ENCODE measurements at regions of chrX and their contacts with region 1.

Region 1: GRCh38 chrX:41796577-41796976 is 72.6 kb downstream of the GPR82 start:
- DNase-seq: no peak
- ATAC-seq: peak; percentile 41
- H3K4me3 ChIP-seq: no peak overlapping the region
- H3K27ac ChIP-seq: no peak overlapping the region
- H3K4me1 ChIP-seq: no peaks in the 10 kb centered on the region
- H3K27me3 ChIP-seq: no peaks in the 10 kb centered on the region
- CTCF ChIP-seq: no peak
- EP300 ChIP-seq: 0 out of 4 replicates have a peak, but pooled peaks of 1 of the 2 experiments have one; percentile 31
- POLR2A ChIP-seq: no peak
- RAD21 ChIP-seq: no peak

Region 2: DNA sequence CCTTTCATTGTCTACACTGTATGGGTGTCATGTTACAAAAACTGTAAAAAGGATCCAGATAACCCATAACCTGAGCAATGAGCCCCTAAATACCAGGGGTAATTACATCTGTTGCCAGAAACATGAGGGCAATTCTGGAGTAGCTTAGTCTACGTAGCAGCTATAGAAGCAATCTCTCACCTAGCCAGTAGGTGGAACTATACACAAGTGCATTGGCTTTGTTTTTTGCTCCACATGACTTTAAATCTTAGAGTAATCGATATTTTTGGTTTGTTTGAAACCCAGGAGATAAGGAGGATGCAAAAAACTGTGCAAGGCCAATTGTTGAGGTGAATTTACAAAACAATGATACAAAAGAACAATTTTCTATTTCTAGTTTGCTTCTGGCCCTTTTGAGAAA is 15.1 kb before region 1 on chrX:
- CTCF ChIA-PET with region 1: interaction called, 16 read pairs
- POLR2A ChIA-PET with region 1: no interaction called
- RAD21 ChIA-PET with region 1: interaction called, 6 read pairs
- SMC1A ChIA-PET with region 1: interaction called, 6 read pairs
- in situ Hi-C with region 1: no loop called
- intact Hi-C with region 1: no loop called
- DNase-seq: no peak
- ATAC-seq: peak; percentile 93
- H3K4me3 ChIP-seq: no peak overlapping the region
- H3K27ac ChIP-seq: no peak overlapping the region
- H3K4me1 ChIP-seq: no peaks in the 10 kb centered on the region
- H3K27me3 ChIP-seq: no peaks in the 10 kb centered on the region
- CTCF ChIP-seq: peak; percentile 67 to 80 (median 71)
- EP300 ChIP-seq: no peak
- POLR2A ChIP-seq: no peak
- RAD21 ChIP-seq: peak; percentile 80

Region 3: GRCh38 chrX:41881166-41881565 is 84.6 kb after region 1 on chrX:
- CTCF ChIA-PET with region 1: interaction called, 3 read pairs
- POLR2A ChIA-PET with region 1: no interaction called
- RAD21 ChIA-PET with region 1: interaction called, 11 read pairs
- SMC1A ChIA-PET with region 1: interaction called, 8 read pairs
- in situ Hi-C with region 1: no loop called
- intact Hi-C with region 1: no loop called
- DNase-seq: no peak
- ATAC-seq: peak; percentile 64
- H3K4me3 ChIP-seq: no peak overlapping the region
- H3K27ac ChIP-seq: no peak overlapping the region
- H3K4me1 ChIP-seq: no peaks in the 10 kb centered on the region
- H3K27me3 ChIP-seq: no peaks in the 10 kb centered on the region
- CTCF ChIP-seq: no peak
- EP300 ChIP-seq: no peak
- POLR2A ChIP-seq: no peak
- RAD21 ChIP-seq: no peak

Region 4: GRCh38 chrX:42093756-42094155 is 297.2 kb after region 1 on chrX:
- CTCF ChIA-PET with region 1: interaction called, 3 read pairs
- POLR2A ChIA-PET with region 1: no interaction called
- RAD21 ChIA-PET with region 1: no interaction called
- SMC1A ChIA-PET with region 1: interaction called, 6 read pairs
- in situ Hi-C with region 1: no loop called
- intact Hi-C with region 1: loop called (anchors 5 kb)
- DNase-seq: peak; percentile 43
- ATAC-seq: peak; percentile 92
- H3K4me3 ChIP-seq: no peak overlapping the region
- H3K27ac ChIP-seq: no peak overlapping the region
- H3K4me1 ChIP-seq: no peaks in the 10 kb centered on the region
- H3K27me3 ChIP-seq: no peaks in the 10 kb centered on the region
- CTCF ChIP-seq: no peak
- EP300 ChIP-seq: no peak
- POLR2A ChIP-seq: no peak
- RAD21 ChIP-seq: no peak

Region 5: DNA sequence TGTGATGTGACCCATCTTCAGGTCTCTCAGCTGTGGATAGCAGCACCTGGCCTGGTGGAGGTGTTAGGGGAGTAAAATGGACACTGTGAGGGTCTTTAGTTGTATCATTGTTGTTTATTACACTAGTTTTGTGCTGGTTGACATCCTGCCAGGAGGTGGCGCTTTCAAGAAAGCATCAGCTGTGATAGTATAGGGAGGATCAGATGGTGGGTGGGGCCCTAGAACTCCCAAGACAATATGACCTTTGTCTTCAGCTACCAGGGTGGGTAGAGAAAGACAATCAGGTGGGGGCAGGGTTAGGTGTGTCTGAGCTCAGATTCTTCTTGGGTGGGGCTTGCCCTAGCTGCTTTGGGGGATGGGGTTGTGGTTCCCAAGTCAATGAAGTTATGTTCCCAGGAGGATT is 818.6 kb after region 1 on chrX:
- CTCF ChIA-PET with region 1: no interaction called
- POLR2A ChIA-PET with region 1: no interaction called
- RAD21 ChIA-PET with region 1: interaction called, 5 read pairs
- SMC1A ChIA-PET with region 1: interaction called, 4 read pairs
- in situ Hi-C with region 1: no loop called
- intact Hi-C with region 1: loop called (anchors 10 kb)
- DNase-seq: no peak
- ATAC-seq: peak; percentile 29; the same call in 1 of the 3 replicates
- H3K4me3 ChIP-seq: no peak overlapping the region
- H3K27ac ChIP-seq: no peak overlapping the region
- H3K4me1 ChIP-seq: no peaks in the 10 kb centered on the region
- H3K27me3 ChIP-seq: no peaks in the 10 kb centered on the region
- CTCF ChIP-seq: peak; percentile 16 to 33 (median 33); a peak in 3 of 6 replicates
- EP300 ChIP-seq: no peak
- POLR2A ChIP-seq: no peak
- RAD21 ChIP-seq: peak; percentile 56

Region 6: DNA sequence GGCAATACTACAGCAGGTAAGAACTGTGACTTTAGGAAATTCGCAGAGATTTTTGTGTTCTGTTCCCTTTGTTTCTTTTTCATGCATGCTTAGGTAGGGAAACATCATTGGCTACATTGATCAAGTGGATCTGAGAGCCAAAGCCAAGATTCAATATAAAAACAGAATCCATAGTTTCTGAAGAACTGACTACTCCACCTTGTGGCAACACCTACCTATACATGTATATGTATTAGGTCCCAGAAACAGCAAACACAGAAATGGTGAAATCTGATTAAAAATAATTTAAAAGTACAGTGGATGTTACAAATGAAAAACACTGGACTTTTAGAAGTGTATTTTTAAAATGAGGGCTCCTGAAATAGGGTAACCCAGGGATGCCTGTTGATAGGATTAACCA is 1537.0 kb after region 1 on chrX:
- CTCF ChIA-PET with region 1: interaction called, 4 read pairs
- POLR2A ChIA-PET with region 1: no interaction called
- RAD21 ChIA-PET with region 1: no interaction called
- SMC1A ChIA-PET with region 1: no interaction called
- in situ Hi-C with region 1: no loop called
- intact Hi-C with region 1: loop called (anchors 10 kb)
- DNase-seq: no peak
- ATAC-seq: no peak
- H3K4me3 ChIP-seq: no peak overlapping the region
- H3K27ac ChIP-seq: no peak overlapping the region
- H3K4me1 ChIP-seq: no peaks in the 10 kb centered on the region
- H3K27me3 ChIP-seq: no peaks in the 10 kb centered on the region
- CTCF ChIP-seq: peak in 1 of 3 experiments; percentile 8; a peak in 1 of 6 replicates
- EP300 ChIP-seq: no peak
- POLR2A ChIP-seq: no peak
- RAD21 ChIP-seq: no peak